Activated naive CD4-positive, alpha-beta T cell treated with anti-CD3 and anti-CD28 coated beads for 36 hours (primary cell): ENCODE measurements at regions of chr5 and their contacts with region 1.

Region 1: DNA sequence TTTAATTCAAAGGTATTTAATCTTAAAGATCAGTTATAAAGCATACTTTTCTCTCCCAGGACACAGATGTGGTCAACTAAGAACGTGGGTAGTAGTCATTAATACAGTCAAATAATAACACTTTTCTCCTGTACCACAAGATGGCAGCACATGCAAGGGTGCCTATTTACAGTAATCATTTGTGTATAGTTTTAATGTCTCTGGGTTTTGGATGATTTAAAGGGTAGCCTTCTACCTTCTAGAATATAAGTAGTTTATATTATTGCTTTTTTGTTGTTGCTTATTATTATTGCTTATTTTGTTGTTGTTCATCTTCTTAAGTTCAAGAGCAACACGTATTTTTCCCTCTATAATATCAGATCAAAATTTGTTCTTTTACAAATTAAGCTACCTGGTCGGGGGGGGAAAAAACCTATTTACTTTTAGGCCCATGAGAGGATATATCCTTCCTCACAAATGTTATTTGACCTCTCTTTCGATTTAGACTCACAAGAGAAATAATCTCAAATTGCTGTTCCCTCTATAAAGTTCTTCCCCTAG is 59.6 kb upstream of the SLC27A6 start:
- DNase-seq: peak; percentile 49
- H3K4me3 Mint-ChIP-seq: no peak overlapping the region
- H3K27ac Mint-ChIP-seq: no peak overlapping the region
- H3K4me1 Mint-ChIP-seq: no peaks in the 10 kb centered on the region
- H3K27me3 Mint-ChIP-seq: peaks cover under 1% of the 10 kb centered on the region

Region 2: DNA sequence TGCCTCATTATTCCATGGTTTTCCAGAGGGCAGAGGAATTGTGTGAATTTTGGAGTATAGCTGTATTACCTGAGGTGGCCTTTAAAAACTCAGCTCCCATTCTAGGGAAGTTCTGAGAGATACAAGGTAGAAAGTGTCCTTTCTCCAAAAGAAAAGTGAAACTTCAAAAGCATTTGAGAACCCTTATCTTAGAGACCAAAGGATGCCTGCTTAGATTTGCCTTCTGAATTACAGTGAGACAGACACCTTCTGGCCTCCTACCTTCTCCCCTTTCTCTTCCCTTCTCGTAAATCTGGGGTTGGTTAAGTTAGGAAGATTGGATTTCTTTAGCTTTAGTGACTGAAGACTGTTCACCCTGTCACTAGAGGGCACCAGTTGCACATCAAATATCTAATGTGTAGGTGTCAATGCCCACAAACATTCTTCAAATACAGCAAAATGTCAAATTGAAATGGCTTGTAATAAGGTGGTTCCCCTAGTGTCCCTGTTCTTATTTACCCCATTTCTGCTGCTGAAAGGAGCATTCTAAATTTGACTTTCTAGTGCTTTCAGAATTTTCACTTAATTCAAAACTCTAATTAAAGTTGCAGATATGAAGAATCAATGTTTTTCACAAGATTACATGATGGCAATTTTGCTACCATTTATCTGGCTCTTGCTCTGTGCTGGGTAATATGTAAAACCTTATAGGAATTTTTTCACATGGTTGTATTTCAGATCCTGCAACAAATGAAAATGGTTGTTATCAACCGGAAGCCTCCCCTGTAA is 1341.5 kb before region 1 on chr5:
- CTCF ChIA-PET with region 1: no interaction called
- intact Hi-C with region 1: loop called (anchors 10 kb)
- DNase-seq: peak; percentile 69
- H3K4me3 Mint-ChIP-seq: no peak overlapping the region
- H3K27ac Mint-ChIP-seq: no peak overlapping the region
- H3K4me1 Mint-ChIP-seq: peaks cover 7% of the 10 kb centered on the region
- H3K27me3 Mint-ChIP-seq: peaks cover 12% of the 10 kb centered on the region

Region 3: DNA sequence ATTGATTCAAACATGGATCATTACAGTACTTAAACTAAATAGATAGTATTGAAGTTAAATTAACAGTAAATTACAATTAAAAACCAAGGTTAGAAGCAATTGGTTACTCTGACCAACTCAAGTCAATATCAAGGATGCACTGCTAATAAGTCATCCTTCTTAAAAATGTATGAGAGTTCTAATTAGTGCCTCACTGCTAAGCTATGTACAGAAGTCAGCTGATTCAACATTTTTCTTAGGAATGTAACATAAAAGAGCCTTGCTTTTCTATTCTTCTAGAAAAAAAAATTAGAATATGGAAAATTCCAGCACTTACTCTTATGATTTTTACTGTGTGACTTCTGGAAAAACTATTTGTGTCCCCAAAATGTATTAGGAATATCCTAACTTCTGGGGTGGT is 291.9 kb before region 1 on chr5:
- CTCF ChIA-PET with region 1: no interaction called
- intact Hi-C with region 1: no loop called
- DNase-seq: no peak
- H3K4me3 Mint-ChIP-seq: no peak overlapping the region
- H3K27ac Mint-ChIP-seq: no peak overlapping the region
- H3K4me1 Mint-ChIP-seq: no peaks in the 10 kb centered on the region
- H3K27me3 Mint-ChIP-seq: peaks cover 4% of the 10 kb centered on the region

Region 4: GRCh38 chr5:128881502-128882008 is 24.1 kb before region 1 on chr5:
- CTCF ChIA-PET with region 1: no interaction called
- intact Hi-C with region 1: no loop called
- DNase-seq: no peak
- H3K4me3 Mint-ChIP-seq: no peak overlapping the region
- H3K27ac Mint-ChIP-seq: no peak overlapping the region
- H3K4me1 Mint-ChIP-seq: no peaks in the 10 kb centered on the region
- H3K27me3 Mint-ChIP-seq: peaks cover 2% of the 10 kb centered on the region

Region 5: GRCh38 chr5:129053438-129053837 is 147.8 kb after region 1 on chr5:
- CTCF ChIA-PET with region 1: interaction called, 3 read pairs
- intact Hi-C with region 1: loop called (anchors 5 kb)
- DNase-seq: no peak
- H3K4me3 Mint-ChIP-seq: no peak overlapping the region
- H3K27ac Mint-ChIP-seq: no peak overlapping the region
- H3K4me1 Mint-ChIP-seq: no peaks in the 10 kb centered on the region
- H3K27me3 Mint-ChIP-seq: peaks cover 20% of the 10 kb centered on the region

Region 6: GRCh38 chr5:129125810-129126209 is 220.2 kb after region 1 on chr5:
- CTCF ChIA-PET with region 1: no interaction called
- intact Hi-C with region 1: loop called (anchors 1 kb)
- DNase-seq: no peak
- H3K4me3 Mint-ChIP-seq: peak overlapping the region; percentile 6
- H3K27ac Mint-ChIP-seq: peak overlapping the region; percentile 62
- H3K4me1 Mint-ChIP-seq: peaks cover 10% of the 10 kb centered on the region
- H3K27me3 Mint-ChIP-seq: no peaks in the 10 kb centered on the region

Region 7: DNA sequence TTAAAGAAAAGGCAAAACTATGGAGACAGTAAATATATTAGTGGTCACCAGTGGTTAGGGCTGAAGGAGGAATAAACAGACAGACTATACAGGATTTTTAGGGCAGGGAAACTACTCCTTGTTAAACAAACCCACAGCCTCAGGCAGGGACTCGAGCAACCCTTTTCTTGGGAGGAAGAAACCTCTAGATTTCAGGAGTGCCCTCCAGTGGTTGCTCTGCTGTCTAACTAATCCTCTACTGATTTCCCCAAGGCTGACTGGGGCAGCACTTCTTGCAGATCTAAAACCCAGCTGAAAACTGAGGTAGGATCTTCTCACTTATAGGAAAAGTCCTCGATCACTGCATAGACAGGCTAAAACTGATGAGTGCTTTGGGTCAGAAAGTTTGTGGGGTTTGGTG is 365.7 kb after region 1 on chr5:
- CTCF ChIA-PET with region 1: no interaction called
- intact Hi-C with region 1: loop called (anchors 10 kb)
- DNase-seq: peak; percentile 7
- H3K4me3 Mint-ChIP-seq: no peak overlapping the region
- H3K27ac Mint-ChIP-seq: no peak overlapping the region
- H3K4me1 Mint-ChIP-seq: no peaks in the 10 kb centered on the region
- H3K27me3 Mint-ChIP-seq: no peaks in the 10 kb centered on the region

Region 8: DNA sequence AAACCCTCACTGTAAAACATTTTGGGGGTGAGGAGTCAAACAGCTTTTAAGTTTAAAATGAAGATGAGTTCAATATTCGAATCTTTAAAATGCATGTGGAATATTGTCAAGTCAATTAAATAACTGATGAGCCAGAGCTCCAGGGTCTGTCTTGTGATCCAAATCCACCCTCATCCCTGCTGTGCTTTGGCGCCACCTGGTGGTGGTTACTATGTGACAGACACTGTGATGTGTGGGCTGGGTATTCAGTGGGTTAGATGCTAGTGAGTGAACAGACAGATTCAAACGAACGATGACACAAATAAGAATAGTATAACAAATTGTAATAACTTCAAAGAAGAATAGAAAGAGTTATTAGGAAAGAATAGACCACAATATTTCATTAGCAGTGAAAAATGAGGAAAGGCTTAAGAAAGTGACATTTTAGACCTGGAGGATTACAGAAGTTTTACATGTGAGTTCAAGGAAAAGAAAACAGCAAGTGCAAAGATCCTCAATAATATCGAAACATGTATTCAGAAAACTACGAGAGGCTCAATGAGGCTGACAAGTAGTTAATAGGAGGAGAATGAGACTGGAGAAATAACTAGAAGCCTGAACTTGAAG is 947.2 kb after region 1 on chr5:
- CTCF ChIA-PET with region 1: interaction called, 3 read pairs
- intact Hi-C with region 1: loop called (anchors 5 kb)
- DNase-seq: peak; percentile 85
- H3K4me3 Mint-ChIP-seq: no peak overlapping the region
- H3K27ac Mint-ChIP-seq: no peak overlapping the region
- H3K4me1 Mint-ChIP-seq: no peaks in the 10 kb centered on the region
- H3K27me3 Mint-ChIP-seq: peaks cover 18% of the 10 kb centered on the region

Region 9: DNA sequence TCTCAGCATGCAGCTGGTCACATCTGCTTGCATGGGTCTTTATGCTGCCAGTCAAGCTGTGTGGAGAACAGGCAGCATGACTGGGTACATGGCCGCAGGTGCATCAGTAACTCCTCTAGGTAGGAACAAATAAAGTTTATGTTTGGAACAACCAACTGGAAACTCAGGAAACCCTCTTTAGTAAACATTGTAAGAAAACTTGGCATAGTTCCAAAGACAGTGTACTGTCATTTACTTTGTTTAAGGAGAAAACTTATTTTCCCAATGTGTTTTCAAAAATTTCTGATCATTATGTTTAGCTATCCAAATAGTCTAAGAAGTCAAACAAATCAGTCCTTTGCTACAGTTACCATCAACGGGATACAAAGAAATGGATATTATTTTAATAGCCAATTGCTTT is 1384.6 kb after region 1 on chr5:
- CTCF ChIA-PET with region 1: no interaction called
- intact Hi-C with region 1: no loop called
- DNase-seq: no peak
- H3K4me3 Mint-ChIP-seq: no peak overlapping the region
- H3K27ac Mint-ChIP-seq: no peak overlapping the region
- H3K4me1 Mint-ChIP-seq: no peaks in the 10 kb centered on the region
- H3K27me3 Mint-ChIP-seq: peaks cover 10% of the 10 kb centered on the region